Dorsolateral prefrontal cortex (tissue), 120 donors: ENCODE measurements at regions of chr14 and their contacts with region 1.

Region 1: GRCh38 chr14:72516936-72517700 is 376.8 kb downstream of the DPF3 start:
- DNase-seq: peak; percentile 53 to 86 (median 78)
- H3K4me3 ChIP-seq: peak overlapping the region in 19 of 59 donors; percentile 2 to 34 (median 22)
- H3K27ac ChIP-seq: peak overlapping the region in 17 of 59 donors; percentile 1 to 78 (median 44)
- H3K27me3 ChIP-seq: no peaks in the 10 kb centered on the region
- CTCF ChIP-seq: peak; percentile 66 to 96 (median 89)

Region 2: GRCh38 chr14:72679536-72680151 is 162.5 kb after region 1 on chr14:
- intact Hi-C with region 1: no loop called
- DNase-seq: peak in 6 of 10 donors; percentile 27 to 93 (median 59)
- H3K4me3 ChIP-seq: no peak overlapping the region
- H3K27ac ChIP-seq: peak overlapping the region in 20 of 59 donors; percentile 7 to 92 (median 33)
- H3K27me3 ChIP-seq: no peaks in the 10 kb centered on the region
- CTCF ChIP-seq: no peak

Region 3: GRCh38 chr14:72904840-72905561 is 387.9 kb after region 1 on chr14:
- intact Hi-C with region 1: loop called (anchors 1 kb)
- DNase-seq: peak in 9 of 10 donors; percentile 39 to 75 (median 68)
- H3K4me3 ChIP-seq: no peak overlapping the region
- H3K27ac ChIP-seq: no peak overlapping the region
- H3K27me3 ChIP-seq: no peaks in the 10 kb centered on the region
- CTCF ChIP-seq: peak; percentile 88 to 99 (median 96)

Region 4: GRCh38 chr14:72948481-72949138 is 431.5 kb after region 1 on chr14:
- intact Hi-C with region 1: loop called (anchors 2 kb)
- DNase-seq: peak; percentile 66 to 88 (median 76)
- H3K4me3 ChIP-seq: no peak overlapping the region
- H3K27ac ChIP-seq: no peak overlapping the region
- H3K27me3 ChIP-seq: no peaks in the 10 kb centered on the region
- CTCF ChIP-seq: peak; percentile 72 to 97 (median 89)

Region 5: GRCh38 chr14:73283608-73284379 is 766.7 kb after region 1 on chr14:
- intact Hi-C with region 1: loop called in 1 of 2 experiments (anchors 10 kb)
- DNase-seq: peak in 4 of 10 donors; percentile 40 to 53 (median 46)
- H3K4me3 ChIP-seq: no peak overlapping the region
- H3K27ac ChIP-seq: peak overlapping the region in 2 of 59 donors; percentile 4 to 7
- H3K27me3 ChIP-seq: no peaks in the 10 kb centered on the region
- CTCF ChIP-seq: peak in 50 of 56 donors; percentile 23 to 74 (median 51)

Region 6: GRCh38 chr14:73472185-73473114 is 955.3 kb after region 1 on chr14:
- intact Hi-C with region 1: loop called in 1 of 2 experiments (anchors 10 kb)
- DNase-seq: no peak
- H3K4me3 ChIP-seq: peak overlapping the region in 1 of 59 donors; percentile 13
- H3K27ac ChIP-seq: peak overlapping the region in 10 of 59 donors; percentile 2 to 59 (median 29)
- H3K27me3 ChIP-seq: no peaks in the 10 kb centered on the region
- CTCF ChIP-seq: peak; percentile 65 to 89 (median 78)